Activated naive CD4-positive, alpha-beta T cell treated with anti-CD3 and anti-CD28 coated beads, Interleukin-2, amount 10 ng/mL, durations not matched to agents 7 days and 5 days (primary cell): ENCODE measurements at regions of chr20 and their contacts with region 1.

Region 1: GRCh38 chr20:62980970-62981369 is 25.8 kb downstream of the BHLHE23 start:
- DNase-seq: peak; percentile 82
- H3K4me3 Mint-ChIP-seq: peak overlapping the region; percentile 37
- H3K27ac Mint-ChIP-seq: no peak overlapping the region
- H3K4me1 Mint-ChIP-seq: peaks cover 72% of the 10 kb centered on the region
- H3K27me3 Mint-ChIP-seq: peaks cover 100% of the 10 kb centered on the region

Region 2: DNA sequence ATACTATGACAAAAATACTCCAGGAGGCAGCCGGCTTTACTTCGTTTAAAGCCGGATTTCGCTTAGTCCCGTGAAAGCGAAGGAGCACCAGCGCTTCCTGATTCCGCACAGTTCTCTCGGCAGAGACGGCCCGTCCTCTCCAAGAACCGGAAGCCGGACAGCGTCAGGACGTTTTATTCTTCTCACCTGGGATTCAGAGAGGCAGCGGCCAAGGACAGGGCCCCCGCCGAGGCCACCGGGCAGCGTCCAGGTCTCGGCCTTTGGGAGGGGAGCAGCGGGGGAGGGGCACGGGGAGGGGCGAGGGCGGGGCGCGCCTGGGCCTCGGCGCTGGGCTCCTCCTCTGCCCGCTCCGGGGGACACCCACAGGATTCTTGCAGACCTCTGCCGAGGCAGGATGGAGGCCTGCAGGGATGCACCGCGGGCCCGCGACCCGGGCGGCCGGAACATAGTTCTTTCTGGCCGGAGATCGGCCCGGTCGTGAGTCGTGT is 51.9 kb before region 1 on chr20:
- CTCF ChIA-PET with region 1: no interaction called
- DNase-seq: peak; percentile 73
- H3K4me3 Mint-ChIP-seq: peak overlapping the region; percentile 95
- H3K27ac Mint-ChIP-seq: peak overlapping the region; percentile 94
- H3K4me1 Mint-ChIP-seq: peaks cover 68% of the 10 kb centered on the region
- H3K27me3 Mint-ChIP-seq: no peaks in the 10 kb centered on the region

Region 3: GRCh38 chr20:63009045-63009961 is 28.3 kb after region 1 on chr20:
- CTCF ChIA-PET with region 1: interaction called, 16 read pairs
- DNase-seq: peak; percentile 88
- H3K4me3 Mint-ChIP-seq: no peak overlapping the region
- H3K27ac Mint-ChIP-seq: peak overlapping the region; percentile 65
- H3K4me1 Mint-ChIP-seq: peaks cover 21% of the 10 kb centered on the region
- H3K27me3 Mint-ChIP-seq: peaks cover 99% of the 10 kb centered on the region